Calu3 (cell line): ENCODE measurements at regions of chr18 and their contacts with region 1.

Region 1: DNA sequence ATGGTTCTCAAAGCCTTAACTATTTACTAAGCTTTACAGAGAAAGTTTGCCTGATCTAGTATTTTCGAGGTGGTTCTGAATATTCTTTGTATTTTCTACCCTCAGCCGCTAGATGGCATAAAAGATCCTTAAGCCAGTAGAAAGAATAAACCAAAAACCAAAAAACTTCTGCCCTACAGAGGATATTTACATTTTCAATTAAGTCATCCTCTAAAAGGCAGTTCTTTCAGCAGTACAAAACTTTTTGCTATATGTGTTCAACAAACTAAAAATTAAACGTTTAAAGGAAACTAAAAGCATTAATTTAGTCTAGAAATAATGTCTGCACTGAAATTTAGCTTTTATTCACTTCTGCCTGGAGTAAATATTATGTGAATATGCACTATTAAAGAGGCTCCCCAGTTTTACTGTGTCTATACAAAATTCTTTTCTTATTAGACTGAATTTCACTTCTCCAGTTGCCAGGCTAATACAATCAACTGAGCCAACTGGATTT is 297.5 kb downstream of the PIEZO2 start:
- DNase-seq: no peak
- H3K4me3 Mint-ChIP-seq: no peak overlapping the region
- H3K27ac Mint-ChIP-seq: no peak overlapping the region
- H3K4me1 Mint-ChIP-seq: peaks cover 16% of the 10 kb centered on the region
- H3K27me3 Mint-ChIP-seq: no peaks in the 10 kb centered on the region
- CTCF ChIP-seq: peak; percentile 46

Region 2: DNA sequence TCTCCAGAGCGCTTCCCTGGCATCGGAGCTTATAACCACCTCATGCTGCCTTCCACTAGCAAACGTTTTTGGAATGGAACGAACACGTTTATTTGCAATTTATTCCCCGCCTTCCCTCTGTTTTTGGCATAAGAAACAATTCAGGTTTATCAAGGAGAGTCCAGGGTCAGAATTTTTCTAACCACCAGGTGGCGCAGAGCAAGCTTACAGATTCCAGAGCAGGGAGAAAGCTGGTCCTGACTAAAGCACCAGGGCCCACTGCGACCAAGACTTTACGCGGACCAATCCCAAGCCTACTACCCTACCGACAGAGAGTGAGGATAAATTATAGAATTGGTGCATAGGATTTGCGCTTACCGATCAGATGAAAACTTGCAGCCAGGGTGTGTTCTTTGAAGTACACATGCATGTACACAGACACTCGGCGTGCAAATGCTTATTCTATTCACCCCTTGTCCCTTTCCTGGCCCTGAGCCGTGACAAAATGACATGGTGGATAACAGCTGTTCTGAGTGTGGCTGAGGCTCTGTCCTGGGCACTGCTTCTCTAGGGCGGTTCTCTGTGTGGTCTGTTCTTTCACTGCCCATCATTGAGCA is 291.3 kb before region 1 on chr18:
- CTCF ChIA-PET with region 1: interaction called, 7 read pairs
- intact Hi-C with region 1: loop called (anchors 2 kb)
- DNase-seq: peak; percentile 79
- H3K4me3 Mint-ChIP-seq: no peak overlapping the region
- H3K27ac Mint-ChIP-seq: no peak overlapping the region
- H3K4me1 Mint-ChIP-seq: no peaks in the 10 kb centered on the region
- H3K27me3 Mint-ChIP-seq: no peaks in the 10 kb centered on the region
- CTCF ChIP-seq: peak; percentile 78

Region 3: GRCh38 chr18:10570622-10571021 is 281.2 kb before region 1 on chr18:
- CTCF ChIA-PET with region 1: no interaction called
- intact Hi-C with region 1: no loop called
- DNase-seq: no peak
- H3K4me3 Mint-ChIP-seq: no peak overlapping the region
- H3K27ac Mint-ChIP-seq: no peak overlapping the region
- H3K4me1 Mint-ChIP-seq: no peaks in the 10 kb centered on the region
- H3K27me3 Mint-ChIP-seq: no peaks in the 10 kb centered on the region
- CTCF ChIP-seq: no peak

Region 4: GRCh38 chr18:10787293-10787901 is 64.5 kb before region 1 on chr18:
- CTCF ChIA-PET with region 1: interaction called, 12 read pairs
- intact Hi-C with region 1: loop called (anchors 1 kb)
- DNase-seq: peak; percentile 92
- H3K4me3 Mint-ChIP-seq: no peak overlapping the region
- H3K27ac Mint-ChIP-seq: no peak overlapping the region
- H3K4me1 Mint-ChIP-seq: no peaks in the 10 kb centered on the region
- H3K27me3 Mint-ChIP-seq: peaks cover 27% of the 10 kb centered on the region
- CTCF ChIP-seq: peak; percentile 66

Region 5: DNA sequence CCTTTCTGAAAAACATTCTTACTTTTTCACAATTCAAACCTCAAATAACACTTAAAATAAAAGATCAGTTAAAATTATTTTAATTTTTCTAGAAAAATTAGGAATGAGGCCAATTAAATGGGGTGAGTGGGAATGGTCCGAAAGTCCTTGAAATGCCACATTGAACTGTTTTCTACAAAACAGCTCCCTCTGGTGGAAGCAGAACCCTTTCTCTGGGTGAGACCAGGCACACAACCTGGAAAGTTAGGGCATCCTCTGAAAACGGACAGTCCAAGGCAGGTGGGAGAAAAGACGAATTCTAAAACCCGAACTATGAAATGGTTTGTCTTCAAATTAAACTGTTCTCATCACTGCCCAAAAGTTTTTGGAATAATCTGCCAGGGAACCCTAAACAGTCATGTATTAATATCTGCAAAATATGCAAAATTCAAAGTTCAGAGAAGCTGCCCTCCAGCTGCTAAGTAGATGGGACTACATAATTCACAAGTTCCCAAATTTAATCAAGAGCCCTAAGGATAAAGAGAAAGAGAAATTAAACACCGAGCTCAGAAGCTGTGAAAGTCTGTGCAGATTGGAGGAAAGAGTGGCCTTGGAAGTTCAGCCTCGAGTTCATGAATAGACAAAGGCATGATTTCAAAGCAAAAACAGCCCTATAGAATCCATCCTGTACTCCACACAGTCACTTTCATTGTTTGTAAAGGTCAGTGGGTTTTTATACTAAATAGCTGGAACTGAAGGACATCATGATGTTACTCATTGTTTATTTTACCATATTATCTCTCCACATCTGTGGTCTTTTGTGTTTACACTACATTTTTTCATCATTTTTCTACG is 189.2 kb after region 1 on chr18:
- CTCF ChIA-PET with region 1: interaction called, 22 read pairs
- intact Hi-C with region 1: loop called (anchors 1 kb)
- DNase-seq: peak; percentile 69
- H3K4me3 Mint-ChIP-seq: no peak overlapping the region
- H3K27ac Mint-ChIP-seq: no peak overlapping the region
- H3K4me1 Mint-ChIP-seq: peaks cover 37% of the 10 kb centered on the region
- H3K27me3 Mint-ChIP-seq: no peaks in the 10 kb centered on the region
- CTCF ChIP-seq: peak; percentile 75